Psoas muscle (tissue), 8 donors: ENCODE measurements at regions of chr10 and their contacts with region 1.

Region 1: DNA sequence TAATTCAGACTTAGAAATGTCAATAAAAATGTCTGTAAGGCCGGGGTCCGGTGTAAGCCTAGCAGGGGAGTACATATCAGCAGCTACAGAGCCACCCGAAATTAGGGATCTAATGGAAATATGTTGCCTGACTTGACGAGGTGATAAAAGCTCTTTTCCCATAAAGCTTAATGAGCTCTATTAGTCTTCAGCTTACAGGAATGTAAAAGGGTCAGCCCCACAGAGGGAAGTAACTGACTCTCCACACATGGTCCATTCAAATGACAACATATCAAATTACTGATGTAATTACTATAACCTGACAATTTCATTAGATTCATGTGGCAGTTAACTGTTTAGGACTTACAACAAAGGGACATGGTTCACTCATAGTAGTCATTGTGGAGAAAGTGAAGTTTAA is 62.3 kb downstream of the ATE1 start:
- DNase-seq: no peak
- ATAC-seq: no peak
- H3K4me3 ChIP-seq: no peak overlapping the region
- H3K27ac ChIP-seq: no peak overlapping the region
- H3K4me1 ChIP-seq: no peaks in the 10 kb centered on the region
- H3K27me3 ChIP-seq: no peaks in the 10 kb centered on the region
- CTCF ChIP-seq: no peak

Region 2: DNA sequence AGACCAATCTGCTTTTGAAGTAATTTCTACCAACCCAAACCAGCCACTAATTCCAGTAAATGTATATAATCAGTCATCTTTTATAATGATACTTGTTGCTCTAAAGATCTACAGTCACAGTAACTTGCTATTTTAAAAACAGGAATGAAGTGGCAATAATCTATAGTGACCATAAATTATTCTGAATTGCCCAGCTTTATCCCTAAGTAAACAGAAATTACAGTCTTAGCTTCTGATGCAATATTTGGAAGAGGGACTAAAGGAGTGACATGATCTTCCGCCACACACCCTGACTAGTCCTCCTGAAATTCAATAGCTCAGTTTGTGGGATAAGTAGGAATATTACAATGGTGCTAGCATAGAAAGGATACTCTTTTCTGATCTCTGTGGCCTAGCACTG is 33.8 kb before region 1 on chr10:
- intact Hi-C with region 1: no loop called
- DNase-seq: no peak
- ATAC-seq: peak in 1 of 4 donors; percentile 59
- H3K4me3 ChIP-seq: no peak overlapping the region
- H3K27ac ChIP-seq: no peak overlapping the region
- H3K4me1 ChIP-seq: no peaks in the 10 kb centered on the region
- H3K27me3 ChIP-seq: no peaks in the 10 kb centered on the region
- CTCF ChIP-seq: no peak

Region 3: DNA sequence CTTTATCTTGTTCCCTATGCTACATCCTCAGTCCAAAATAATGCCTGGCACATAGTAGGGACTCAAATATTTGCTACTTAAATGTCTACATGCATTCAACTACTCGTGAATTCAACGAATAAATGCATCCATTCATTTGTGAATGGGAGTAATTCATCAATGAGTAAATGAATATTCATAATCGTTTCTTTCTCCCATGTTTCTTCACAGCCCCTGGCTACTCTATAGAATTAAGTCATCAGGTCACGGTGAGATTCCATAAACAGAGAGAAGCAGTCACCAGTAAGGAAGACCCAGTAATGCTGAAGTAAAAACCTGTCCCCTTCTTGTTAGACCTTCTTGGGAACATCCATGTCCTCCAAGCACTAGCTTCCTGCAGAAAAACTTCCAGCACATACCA is 13.9 kb after region 1 on chr10:
- intact Hi-C with region 1: loop called in 1 of 2 experiments (anchors 2 kb)
- DNase-seq: no peak
- ATAC-seq: no peak
- H3K4me3 ChIP-seq: no peak overlapping the region
- H3K27ac ChIP-seq: no peak overlapping the region
- H3K4me1 ChIP-seq: no peaks in the 10 kb centered on the region
- H3K27me3 ChIP-seq: no peaks in the 10 kb centered on the region
- CTCF ChIP-seq: no peak